ENCODE measurements at regions of chr3 and their contacts with region 1.

Region 1: GRCh38 chr3:15205934-15206661 is at the start of gene CAPN7:
- DNase-seq: peak; percentile 98
- H3K4me3 ChIP-seq: peak within 1 kb of the TSS; percentile 69 to 94 (median 87)
- H3K27ac ChIP-seq: peak within 1 kb of the TSS; percentile 66
- H3K4me1 ChIP-seq: peaks cover 6% of the 10 kb centered on the region
- H3K27me3 ChIP-seq: no peaks in the 10 kb centered on the region
- CTCF ChIP-seq: peak; percentile 31 to 50
- POLR2A ChIP-seq: peak; percentile 86
- total RNA-seq, gene CAPN7: 28.8 and 32.7 TPM in 2 replicates

Region 2: DNA sequence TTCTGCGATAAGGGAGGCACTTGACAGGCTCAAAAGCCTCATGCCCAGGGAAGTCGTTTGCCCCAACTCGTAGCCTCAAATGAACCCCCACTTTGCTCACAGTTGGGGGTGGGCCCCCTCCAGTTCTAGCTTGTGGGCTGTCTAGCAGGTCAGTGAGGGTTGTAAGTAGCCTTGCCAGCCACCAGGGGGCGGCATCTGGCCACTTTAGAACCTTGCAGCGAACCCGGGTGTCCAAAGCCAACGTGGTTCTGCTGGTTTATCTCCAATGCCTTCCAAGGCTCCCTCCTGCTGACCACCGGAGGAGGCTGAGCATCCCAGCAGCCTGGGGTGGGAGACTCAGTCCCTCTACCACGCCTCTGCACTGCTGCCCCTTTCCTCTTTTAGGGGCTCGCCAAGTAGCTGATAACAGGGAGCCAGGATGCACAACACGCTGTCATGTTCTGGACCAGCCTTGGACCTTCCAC is 98.0 kb before region 1 on chr3:
- CTCF ChIA-PET with region 1: interaction called, 9 read pairs
- POLR2A ChIA-PET with region 1: no interaction called
- dilution Hi-C with region 1: no loop called
- intact Hi-C with region 1: loop called (anchors 2 kb)
- DNase-seq: peak; percentile 62
- H3K4me3 ChIP-seq: no peak overlapping the region
- H3K27ac ChIP-seq: no peak overlapping the region
- H3K4me1 ChIP-seq: no peaks in the 10 kb centered on the region
- H3K27me3 ChIP-seq: peaks cover 2 to 3% of the 10 kb centered on the region in 2 experiments
- CTCF ChIP-seq: peak; percentile 88 to 96
- POLR2A ChIP-seq: no peak

Region 3: DNA sequence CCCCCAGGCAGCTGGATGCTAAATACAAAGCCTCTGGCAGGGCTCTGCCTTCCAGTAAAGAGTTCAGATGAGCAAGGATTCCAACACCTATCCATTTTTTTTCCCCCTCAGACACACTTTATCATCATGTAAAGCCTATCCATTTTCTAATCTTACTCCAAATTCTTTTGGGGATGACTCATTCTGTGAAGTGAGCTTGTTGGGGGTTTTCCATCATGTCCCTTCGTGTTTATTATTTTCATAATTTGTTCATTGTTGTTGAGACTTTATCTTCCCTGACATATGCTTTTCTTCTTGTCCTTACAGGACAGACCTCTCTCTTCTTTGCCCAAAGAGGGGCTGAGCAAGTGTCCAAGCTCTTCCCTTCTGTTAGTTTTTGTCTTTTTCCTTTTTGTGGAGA is 161.0 kb after region 1 on chr3:
- CTCF ChIA-PET with region 1: no interaction called
- POLR2A ChIA-PET with region 1: no interaction called
- dilution Hi-C with region 1: no loop called
- intact Hi-C with region 1: no loop called
- DNase-seq: peak; percentile 56
- H3K4me3 ChIP-seq: no peak overlapping the region
- H3K27ac ChIP-seq: peak overlapping the region; percentile 26
- H3K4me1 ChIP-seq: peaks cover 28% of the 10 kb centered on the region
- H3K27me3 ChIP-seq: no peaks in the 10 kb centered on the region
- CTCF ChIP-seq: no peak
- POLR2A ChIP-seq: no peak

Region 4: GRCh38 chr3:15377961-15378791 is 172.1 kb after region 1 on chr3:
- CTCF ChIA-PET with region 1: no interaction called
- POLR2A ChIA-PET with region 1: no interaction called
- dilution Hi-C with region 1: no loop called
- intact Hi-C with region 1: loop called (anchors 1 kb)
- DNase-seq: peak; percentile 96
- H3K4me3 ChIP-seq: no peak overlapping the region
- H3K27ac ChIP-seq: peak overlapping the region; percentile 71
- H3K4me1 ChIP-seq: peaks cover 2% of the 10 kb centered on the region
- H3K27me3 ChIP-seq: no peaks in the 10 kb centered on the region
- CTCF ChIP-seq: peak; percentile 81 to 91
- POLR2A ChIP-seq: no peak

Region 5: GRCh38 chr3:15557511-15557946 is 351.4 kb after region 1 on chr3:
- CTCF ChIA-PET with region 1: interaction called, 19 read pairs
- POLR2A ChIA-PET with region 1: no interaction called
- dilution Hi-C with region 1: no loop called
- intact Hi-C with region 1: loop called (anchors 1 kb)
- DNase-seq: peak; percentile 93
- H3K4me3 ChIP-seq: no peak overlapping the region
- H3K27ac ChIP-seq: no peak overlapping the region
- H3K4me1 ChIP-seq: no peaks in the 10 kb centered on the region
- H3K27me3 ChIP-seq: no peaks in the 10 kb centered on the region
- CTCF ChIP-seq: peak; percentile 36 to 37
- POLR2A ChIP-seq: no peak

Region 6: DNA sequence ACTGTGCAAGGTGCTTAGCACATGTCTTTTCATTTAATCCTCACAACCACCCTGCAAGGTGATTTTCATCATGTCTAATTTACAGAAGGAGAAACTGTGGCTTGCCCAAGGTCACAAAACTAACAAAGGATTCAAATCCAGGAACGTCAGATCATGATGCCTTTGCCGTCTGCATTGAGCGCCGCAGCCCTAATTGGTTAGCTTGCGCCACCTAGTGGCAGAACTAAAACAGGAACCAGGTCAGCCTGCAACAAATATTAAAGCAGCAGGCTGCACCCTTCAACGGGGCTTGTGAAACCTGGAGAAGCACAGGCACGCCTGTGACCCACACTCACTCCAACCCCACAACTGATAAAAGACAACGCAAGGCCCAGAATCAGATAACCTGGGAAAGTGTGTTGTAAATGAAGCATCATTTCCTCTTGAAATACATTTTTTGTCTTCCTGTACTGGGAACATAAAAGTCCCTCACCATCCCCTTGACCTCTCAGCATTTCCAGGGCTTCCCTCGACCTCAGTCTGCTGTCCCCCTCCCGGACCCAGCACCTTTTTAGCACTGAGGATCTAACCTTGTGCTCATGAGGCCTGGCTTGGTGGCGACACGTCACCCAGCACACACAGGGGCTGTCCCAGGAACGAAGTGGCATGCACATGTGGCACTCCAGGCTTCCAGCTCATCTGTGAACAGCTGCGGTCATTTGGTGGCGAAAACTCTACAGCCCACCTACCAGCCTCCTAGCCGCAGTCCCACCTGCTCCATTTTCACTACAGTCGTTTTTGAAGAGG is 1041.4 kb after region 1 on chr3:
- CTCF ChIA-PET with region 1: no interaction called
- POLR2A ChIA-PET with region 1: no interaction called
- dilution Hi-C with region 1: no loop called
- intact Hi-C with region 1: loop called (anchors 1 kb)
- DNase-seq: peak; percentile 72
- H3K4me3 ChIP-seq: no peak overlapping the region
- H3K27ac ChIP-seq: no peak overlapping the region
- H3K4me1 ChIP-seq: peaks cover 11% of the 10 kb centered on the region
- H3K27me3 ChIP-seq: no peaks in the 10 kb centered on the region
- CTCF ChIP-seq: peak; percentile 86 to 87
- POLR2A ChIP-seq: no peak

Measured in endothelial cell of umbilical vein (primary cell).